ENCODE measurements at regions of chrX and their contacts with region 1.

Region 1: DNA sequence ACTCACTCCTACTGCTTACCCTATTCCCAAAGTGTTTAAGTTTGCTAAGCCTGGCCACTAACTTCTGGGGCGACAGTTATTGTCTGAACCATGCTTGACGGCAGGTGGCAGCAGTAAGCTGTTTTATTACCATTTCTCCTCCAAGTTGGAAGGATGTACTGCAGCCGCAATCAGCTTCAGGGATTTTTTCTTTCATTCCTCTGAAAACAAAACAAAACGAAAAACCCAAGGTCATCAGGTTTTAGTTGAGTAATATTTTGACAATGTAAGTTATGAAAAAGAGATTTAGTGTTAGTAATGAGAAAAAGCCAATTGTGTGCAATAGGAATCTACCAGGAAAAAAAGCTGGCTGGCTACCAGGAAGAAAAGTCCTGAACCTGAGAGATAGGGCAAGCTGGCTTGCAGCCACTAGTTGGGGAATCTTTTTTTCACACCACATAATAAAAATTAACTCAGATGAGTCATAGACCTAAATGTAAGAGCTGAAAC is 13.2 kb upstream of the RAB9B start:
- DNase-seq: peak; percentile 6 to 62 (median 26)
- ATAC-seq: peak; percentile 41
- H3K4me3 ChIP-seq: no peak overlapping the region
- H3K4me3 Mint-ChIP-seq: no peak overlapping the region
- H3K27ac ChIP-seq: no peak overlapping the region
- H3K27ac Mint-ChIP-seq: no peak overlapping the region
- H3K4me1 ChIP-seq: no peaks in the 10 kb centered on the region
- H3K4me1 Mint-ChIP-seq: no peaks in the 10 kb centered on the region
- H3K27me3 ChIP-seq: no peaks in the 10 kb centered on the region
- H3K27me3 Mint-ChIP-seq: no peaks in the 10 kb centered on the region
- CTCF ChIP-seq: peak; percentile 70

Region 2: GRCh38 chrX:103918581-103919269 is 73.5 kb after region 1 on chrX:
- CTCF ChIA-PET with region 1: no interaction called
- POLR2A ChIA-PET with region 1: no interaction called
- intact Hi-C with region 1: loop called in 1 of 2 experiments (anchors 1 kb)
- DNase-seq: peak; percentile 18 to 79 (median 41)
- ATAC-seq: peak; percentile 74
- H3K4me3 ChIP-seq: peak overlapping the region; percentile 75
- H3K4me3 Mint-ChIP-seq: peak overlapping the region; percentile 90
- H3K27ac ChIP-seq: peak overlapping the region; percentile 53 to 75
- H3K27ac Mint-ChIP-seq: peak overlapping the region; percentile 95
- H3K4me1 ChIP-seq: peaks cover 25% of the 10 kb centered on the region
- H3K4me1 Mint-ChIP-seq: peaks cover 18% of the 10 kb centered on the region
- H3K27me3 ChIP-seq: no peaks in the 10 kb centered on the region
- H3K27me3 Mint-ChIP-seq: no peaks in the 10 kb centered on the region
- CTCF ChIP-seq: no peak

Region 3: GRCh38 chrX:103932133-103932532 is 86.9 kb after region 1 on chrX:
- CTCF ChIA-PET with region 1: interaction called, 4 read pairs
- POLR2A ChIA-PET with region 1: no interaction called
- intact Hi-C with region 1: loop called in 1 of 2 experiments (anchors 5 kb)
- DNase-seq: no peak
- ATAC-seq: no peak
- H3K4me3 ChIP-seq: no peak overlapping the region
- H3K4me3 Mint-ChIP-seq: no peak overlapping the region
- H3K27ac ChIP-seq: no peak overlapping the region
- H3K27ac Mint-ChIP-seq: no peak overlapping the region
- H3K4me1 ChIP-seq: peaks cover 2% of the 10 kb centered on the region
- H3K4me1 Mint-ChIP-seq: peaks cover under 1% of the 10 kb centered on the region
- H3K27me3 ChIP-seq: no peaks in the 10 kb centered on the region
- H3K27me3 Mint-ChIP-seq: no peaks in the 10 kb centered on the region
- CTCF ChIP-seq: no peak

Region 4: GRCh38 chrX:103941201-103941975 is 96.2 kb after region 1 on chrX:
- CTCF ChIA-PET with region 1: interaction called, 5 read pairs
- POLR2A ChIA-PET with region 1: no interaction called
- intact Hi-C with region 1: loop called in 1 of 2 experiments (anchors 1 kb)
- DNase-seq: peak in 4 of 14 experiments; percentile 36 to 55 (median 47)
- ATAC-seq: no peak
- H3K4me3 ChIP-seq: no peak overlapping the region
- H3K4me3 Mint-ChIP-seq: no peak overlapping the region
- H3K27ac ChIP-seq: no peak overlapping the region
- H3K27ac Mint-ChIP-seq: no peak overlapping the region
- H3K4me1 ChIP-seq: peaks cover 5% of the 10 kb centered on the region
- H3K4me1 Mint-ChIP-seq: peaks cover 13% of the 10 kb centered on the region
- H3K27me3 ChIP-seq: no peaks in the 10 kb centered on the region
- H3K27me3 Mint-ChIP-seq: no peaks in the 10 kb centered on the region
- CTCF ChIP-seq: peak; percentile 54

Region 5: GRCh38 chrX:104136241-104137019 is 291.2 kb after region 1 on chrX:
- CTCF ChIA-PET with region 1: no interaction called
- POLR2A ChIA-PET with region 1: no interaction called
- intact Hi-C with region 1: loop called in 1 of 2 experiments (anchors 5 kb)
- DNase-seq: peak in 13 of 14 experiments; percentile 24 to 81 (median 40)
- ATAC-seq: peak; percentile 78
- H3K4me3 ChIP-seq: no peak overlapping the region
- H3K4me3 Mint-ChIP-seq: no peak overlapping the region
- H3K27ac ChIP-seq: no peak overlapping the region
- H3K27ac Mint-ChIP-seq: no peak overlapping the region
- H3K4me1 ChIP-seq: peaks cover 10% of the 10 kb centered on the region
- H3K4me1 Mint-ChIP-seq: peaks cover 24% of the 10 kb centered on the region
- H3K27me3 ChIP-seq: no peaks in the 10 kb centered on the region
- H3K27me3 Mint-ChIP-seq: no peaks in the 10 kb centered on the region
- CTCF ChIP-seq: peak; percentile 75